ENCODE measurements at regions of chr10 and their contacts with region 1.

Region 1: GRCh38 chr10:37739181-37739580 is 118.2 kb downstream of the ZNF248 start:
- DNase-seq: no peak
- H3K4me3 ChIP-seq: no peak overlapping the region
- H3K27ac ChIP-seq: no peak overlapping the region
- H3K4me1 ChIP-seq: no peaks in the 10 kb centered on the region
- CTCF ChIP-seq: no peak

Region 2: DNA sequence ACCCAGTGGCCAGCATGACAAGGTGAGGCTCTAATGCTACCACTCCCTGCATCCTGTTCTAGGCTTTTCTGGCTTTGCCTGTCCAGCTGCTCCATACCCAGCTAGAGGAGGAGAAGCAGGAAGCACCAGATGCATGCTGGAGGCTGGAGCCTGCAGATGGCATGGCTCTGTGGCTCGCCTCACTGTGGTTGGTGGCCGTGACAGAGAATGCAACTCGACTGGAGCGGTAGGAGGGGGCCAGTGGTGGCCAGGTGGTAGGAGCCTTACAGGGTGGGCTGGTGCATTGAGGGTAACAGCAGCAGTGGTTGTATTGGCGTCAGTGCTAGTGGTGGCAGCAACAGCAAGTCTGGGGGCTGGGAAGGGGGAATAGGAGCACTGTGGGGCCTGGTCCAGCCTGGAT is 10.4 kb before region 1 on chr10:
- CTCF ChIA-PET with region 1: no interaction called
- POLR2A ChIA-PET with region 1: no interaction called
- intact Hi-C with region 1: loop called (anchors 1 kb)
- DNase-seq: no peak
- H3K4me3 ChIP-seq: no peak overlapping the region
- H3K27ac ChIP-seq: no peak overlapping the region
- H3K4me1 ChIP-seq: no peaks in the 10 kb centered on the region
- CTCF ChIP-seq: no peak